Ovary (tissue), 10 donors: ENCODE measurements at regions of chr17 and their contacts with region 1.

Region 1: DNA sequence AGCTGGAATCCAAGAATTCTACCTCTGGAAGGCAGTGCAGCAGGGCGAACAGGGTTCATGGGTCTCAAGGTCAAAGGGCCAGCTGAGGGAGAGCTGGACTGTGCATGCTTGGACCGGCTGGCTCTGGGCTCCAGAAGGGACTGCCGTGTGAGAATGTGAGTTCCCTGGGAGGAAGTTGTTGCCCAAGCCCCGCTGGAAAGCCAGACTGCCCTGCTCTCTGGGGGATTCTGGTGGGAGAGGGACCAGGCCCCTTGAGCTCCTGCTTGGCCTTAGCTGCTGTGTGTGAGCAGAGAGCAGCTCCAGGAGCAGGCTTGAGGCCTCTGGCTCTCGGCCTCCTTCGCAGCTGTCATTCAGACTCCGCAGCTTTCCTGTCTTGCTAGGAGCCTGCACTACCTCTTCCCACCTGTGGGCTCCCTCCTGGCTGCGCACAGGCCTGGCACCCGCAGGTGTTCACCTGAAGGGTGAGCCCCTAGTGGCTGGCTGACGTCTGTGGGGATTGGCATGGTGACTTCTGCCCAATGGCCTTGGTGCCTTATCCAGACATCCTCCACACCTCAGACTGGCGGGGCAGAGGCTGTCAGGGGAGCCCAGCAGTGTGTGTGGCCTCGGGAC is 84.8 kb downstream of the NT5M start:
- DNase-seq: no peak
- H3K4me3 ChIP-seq: no peak overlapping the region
- H3K27ac ChIP-seq: no peak overlapping the region
- H3K4me1 ChIP-seq: no peaks in the 10 kb centered on the region
- H3K27me3 ChIP-seq: no peaks in the 10 kb centered on the region
- CTCF ChIP-seq: no peak
- EP300 ChIP-seq: no peak
- POLR2A ChIP-seq: no peak

Region 2: GRCh38 chr17:17344462-17345293 is 43.3 kb before region 1 on chr17:
- intact Hi-C with region 1: no loop called
- DNase-seq: peak in 1 of 5 donors; percentile 33
- H3K4me3 ChIP-seq: no peak overlapping the region
- H3K27ac ChIP-seq: no peak overlapping the region
- H3K4me1 ChIP-seq: peaks cover 2% of the 10 kb centered on the region
- H3K27me3 ChIP-seq: no peaks in the 10 kb centered on the region
- CTCF ChIP-seq: no peak
- EP300 ChIP-seq: no peak
- POLR2A ChIP-seq: no peak

Region 3: GRCh38 chr17:17454276-17454675 is 66.3 kb after region 1 on chr17:
- intact Hi-C with region 1: no loop called
- DNase-seq: no peak
- H3K4me3 ChIP-seq: no peak overlapping the region
- H3K27ac ChIP-seq: no peak overlapping the region
- H3K4me1 ChIP-seq: no peaks in the 10 kb centered on the region
- H3K27me3 ChIP-seq: no peaks in the 10 kb centered on the region
- CTCF ChIP-seq: no peak
- EP300 ChIP-seq: no peak
- POLR2A ChIP-seq: no peak

Region 4: GRCh38 chr17:17467720-17468119 is 79.8 kb after region 1 on chr17:
- intact Hi-C with region 1: loop called in 1 of 4 experiments (anchors 10 kb)
- DNase-seq: no peak
- H3K4me3 ChIP-seq: no peak overlapping the region
- H3K27ac ChIP-seq: no peak overlapping the region
- H3K4me1 ChIP-seq: no peaks in the 10 kb centered on the region
- H3K27me3 ChIP-seq: no peaks in the 10 kb centered on the region
- CTCF ChIP-seq: no peak
- EP300 ChIP-seq: no peak
- POLR2A ChIP-seq: no peak

Region 5: GRCh38 chr17:17959520-17960361 is 571.8 kb after region 1 on chr17:
- intact Hi-C with region 1: loop called in 1 of 4 experiments (anchors 10 kb)
- DNase-seq: no peak
- H3K4me3 ChIP-seq: no peak overlapping the region
- H3K27ac ChIP-seq: peak overlapping the region in 1 of 2 donors; percentile 37
- H3K4me1 ChIP-seq: peaks cover 5% of the 10 kb centered on the region
- H3K27me3 ChIP-seq: no peaks in the 10 kb centered on the region
- CTCF ChIP-seq: no peak
- EP300 ChIP-seq: no peak
- POLR2A ChIP-seq: no peak